ENCODE measurements at regions of chr7 and their contacts with region 1.

Region 1: GRCh38 chr7:101815835-101816493 is 1.5 kb upstream of the CUX1 start:
- DNase-seq: peak; percentile 74 to 76
- ATAC-seq: peak; percentile 75 to 86 (median 78)
- H3K4me3 ChIP-seq: peak overlapping the region in 9 of 10 donors; percentile 55 to 91 (median 81)
- H3K27ac ChIP-seq: peak overlapping the region; percentile 50 to 87 (median 76)
- H3K4me1 ChIP-seq: peaks cover 5 to 51% (median 35%) of the 10 kb centered on the region in 9 donors
- H3K27me3 ChIP-seq: peaks cover 0 to 7% (median 0%) of the 10 kb centered on the region in 7 donors
- CTCF ChIP-seq: peak in 5 of 9 donors; percentile 5 to 40 (median 34)

Region 2: GRCh38 chr7:101542527-101543241 is 273.3 kb before region 1 on chr7:
- intact Hi-C with region 1: loop called in 1 of 10 experiments (anchors 5 kb)
- DNase-seq: peak; percentile 47 to 55
- ATAC-seq: peak; percentile 9 to 61 (median 32)
- H3K4me3 ChIP-seq: no peak overlapping the region
- H3K27ac ChIP-seq: no peak overlapping the region
- H3K4me1 ChIP-seq: peaks cover 0 to 11% (median 0%) of the 10 kb centered on the region in 9 donors
- H3K27me3 ChIP-seq: peaks cover 0 to 9% (median 0%) of the 10 kb centered on the region in 7 donors
- CTCF ChIP-seq: peak; percentile 83 to 94 (median 88)

Region 3: DNA sequence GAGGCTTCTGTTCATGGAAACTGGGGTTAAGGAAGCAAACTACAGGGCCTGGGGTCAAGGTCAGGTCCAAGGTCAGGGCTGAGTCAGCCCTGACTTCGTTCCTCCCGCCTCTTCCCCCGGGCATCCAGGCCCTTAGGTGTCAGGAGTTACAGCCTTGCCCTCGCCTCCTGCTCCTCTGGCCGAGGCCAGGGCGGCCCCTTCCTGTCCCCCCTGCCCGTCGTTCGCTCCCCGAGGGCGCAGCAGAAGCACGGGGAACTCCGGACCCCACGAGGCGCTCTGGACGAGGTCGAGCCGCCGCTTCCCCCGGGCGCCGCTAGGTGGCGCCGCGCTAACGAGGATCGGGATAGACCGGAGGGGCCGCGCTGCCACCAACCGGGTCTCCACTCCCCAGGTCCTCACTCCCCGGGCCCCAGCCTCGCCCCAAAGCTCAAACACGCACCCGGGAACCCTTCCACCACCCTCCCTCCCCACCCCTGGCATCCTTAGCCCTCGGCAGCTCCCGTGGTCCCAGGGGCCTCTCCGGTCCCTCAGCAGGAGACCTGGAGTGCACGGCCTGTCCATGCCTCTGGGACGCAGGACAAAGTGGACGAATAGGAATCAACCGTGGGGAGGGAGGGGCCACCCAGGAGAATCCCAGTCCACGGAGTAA is 127.7 kb before region 1 on chr7:
- intact Hi-C with region 1: loop called in 8 of 10 experiments (anchors 1 to 5 kb)
- DNase-seq: peak; percentile 79 to 88
- ATAC-seq: peak; percentile 88 to 93 (median 91)
- H3K4me3 ChIP-seq: peak overlapping the region in 9 of 10 donors; percentile 4 to 35 (median 24)
- H3K27ac ChIP-seq: peak overlapping the region in 2 of 10 donors; percentile 10 to 32
- H3K4me1 ChIP-seq: peaks cover 0 to 14% (median 11%) of the 10 kb centered on the region in 9 donors
- H3K27me3 ChIP-seq: no peaks in the 10 kb centered on the region
- CTCF ChIP-seq: peak; percentile 92 to 98 (median 97)

Region 4: GRCh38 chr7:101856473-101857357 is 40.8 kb after region 1 on chr7:
- intact Hi-C with region 1: loop called in 3 of 10 experiments (anchors 5 kb)
- DNase-seq: peak; percentile 89
- ATAC-seq: peak; percentile 86 to 96 (median 94)
- H3K4me3 ChIP-seq: peak overlapping the region in 9 of 10 donors; percentile 22 to 55 (median 44)
- H3K27ac ChIP-seq: peak overlapping the region; percentile 76 to 94 (median 88)
- H3K4me1 ChIP-seq: peaks cover 12 to 66% (median 58%) of the 10 kb centered on the region in 9 donors
- H3K27me3 ChIP-seq: no peaks in the 10 kb centered on the region
- CTCF ChIP-seq: peak; percentile 30 to 65 (median 50)

Region 5: GRCh38 chr7:101936611-101937231 is 120.8 kb after region 1 on chr7:
- intact Hi-C with region 1: loop called in 1 of 10 experiments (anchors 10 kb)
- DNase-seq: peak in 1 of 2 donors; percentile 38
- ATAC-seq: peak; percentile 30 to 56 (median 50)
- H3K4me3 ChIP-seq: peak overlapping the region in 9 of 10 donors; percentile 11 to 49 (median 38)
- H3K27ac ChIP-seq: peak overlapping the region; percentile 78 to 92 (median 88)
- H3K4me1 ChIP-seq: peaks cover 21 to 71% (median 56%) of the 10 kb centered on the region in 9 donors
- H3K27me3 ChIP-seq: no peaks in the 10 kb centered on the region
- CTCF ChIP-seq: no peak

Region 6: GRCh38 chr7:102044984-102045673 is 229.2 kb after region 1 on chr7:
- intact Hi-C with region 1: no loop called
- DNase-seq: peak; percentile 37 to 63
- ATAC-seq: peak; percentile 45 to 91 (median 59)
- H3K4me3 ChIP-seq: peak overlapping the region in 9 of 10 donors; percentile 2 to 37 (median 27)
- H3K27ac ChIP-seq: peak overlapping the region; percentile 8 to 77 (median 64)
- H3K4me1 ChIP-seq: peaks cover 7 to 57% (median 25%) of the 10 kb centered on the region in 9 donors
- H3K27me3 ChIP-seq: no peaks in the 10 kb centered on the region
- CTCF ChIP-seq: no peak

Region 7: GRCh38 chr7:102140952-102141370 is 325.0 kb after region 1 on chr7:
- intact Hi-C with region 1: loop called in 1 of 10 experiments (anchors 10 kb)
- DNase-seq: no peak
- ATAC-seq: peak in 2 of 8 donors; percentile 26 to 56
- H3K4me3 ChIP-seq: no peak overlapping the region
- H3K27ac ChIP-seq: peak overlapping the region in 1 of 10 donors; percentile 42
- H3K4me1 ChIP-seq: peaks cover 0 to 13% (median 4%) of the 10 kb centered on the region in 9 donors
- H3K27me3 ChIP-seq: no peaks in the 10 kb centered on the region
- CTCF ChIP-seq: no peak

Region 8: GRCh38 chr7:102230593-102230992 is 414.6 kb after region 1 on chr7:
- intact Hi-C with region 1: loop called in 6 of 10 experiments (anchors 5 to 10 kb)
- DNase-seq: no peak
- ATAC-seq: no peak
- H3K4me3 ChIP-seq: no peak overlapping the region
- H3K27ac ChIP-seq: no peak overlapping the region
- H3K4me1 ChIP-seq: peaks cover 0 to 15% (median 4%) of the 10 kb centered on the region in 9 donors
- H3K27me3 ChIP-seq: no peaks in the 10 kb centered on the region
- CTCF ChIP-seq: no peak